PC-9 (cell line): ENCODE measurements at regions of chr6 and their contacts with region 1.

Region 1: GRCh38 chr6:130666786-130667185 is 160.4 kb upstream of the SMLR1 start:
- DNase-seq: no peak
- H3K4me3 ChIP-seq: no peak overlapping the region
- H3K27ac ChIP-seq: no peak overlapping the region
- H3K4me1 ChIP-seq: no peaks in the 10 kb centered on the region
- H3K27me3 ChIP-seq: no peaks in the 10 kb centered on the region
- CTCF ChIP-seq: no peak

Region 2: GRCh38 chr6:130313206-130313605 is 353.6 kb before region 1 on chr6:
- CTCF ChIA-PET with region 1: no interaction called
- POLR2A ChIA-PET with region 1: no interaction called
- intact Hi-C with region 1: no loop called
- DNase-seq: no peak
- H3K4me3 ChIP-seq: no peak overlapping the region
- H3K27ac ChIP-seq: no peak overlapping the region
- H3K4me1 ChIP-seq: no peaks in the 10 kb centered on the region; the same call in 1 of the 2 replicates
- H3K27me3 ChIP-seq: no peaks in the 10 kb centered on the region
- CTCF ChIP-seq: no peak

Region 3: GRCh38 chr6:130485870-130486269 is 180.9 kb before region 1 on chr6:
- CTCF ChIA-PET with region 1: no interaction called
- POLR2A ChIA-PET with region 1: interaction called, 13 read pairs
- intact Hi-C with region 1: no loop called
- DNase-seq: no peak
- H3K4me3 ChIP-seq: no peak overlapping the region
- H3K27ac ChIP-seq: no peak overlapping the region
- H3K4me1 ChIP-seq: no peaks in the 10 kb centered on the region
- H3K27me3 ChIP-seq: no peaks in the 10 kb centered on the region
- CTCF ChIP-seq: no peak

Region 4: DNA sequence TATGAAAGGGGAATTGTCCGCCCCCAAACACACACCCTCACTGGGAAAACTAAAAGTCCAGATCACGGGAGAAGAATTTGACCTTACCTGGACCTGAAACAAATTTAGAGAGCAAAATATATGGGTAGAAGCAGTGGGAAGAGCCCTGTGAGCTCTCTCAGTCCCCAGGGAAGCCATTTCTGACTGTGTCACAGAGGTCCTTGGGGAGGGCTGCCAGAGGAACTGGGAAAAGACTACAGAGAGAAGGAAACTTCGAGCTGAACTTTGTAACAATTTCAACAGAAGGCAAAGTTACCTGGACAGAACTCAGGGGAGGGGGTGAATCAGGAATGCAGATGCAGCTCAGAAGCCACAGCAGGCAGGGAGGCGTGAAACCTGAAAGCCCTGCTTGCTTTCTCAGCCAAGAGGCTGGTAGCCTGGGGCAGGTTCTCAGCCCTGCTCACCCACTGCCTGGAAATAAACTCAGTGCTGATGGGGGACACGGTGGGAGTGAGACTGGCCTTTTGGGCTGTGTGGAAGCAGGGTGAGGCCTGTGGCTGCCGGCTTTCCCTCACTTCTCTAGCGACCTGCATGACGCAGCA is 137.1 kb before region 1 on chr6:
- CTCF ChIA-PET with region 1: no interaction called
- POLR2A ChIA-PET with region 1: no interaction called
- intact Hi-C with region 1: no loop called
- DNase-seq: peak; percentile 27 to 40
- H3K4me3 ChIP-seq: no peak overlapping the region
- H3K27ac ChIP-seq: peak overlapping the region; percentile 27; the same call in 1 of the 2 replicates
- H3K4me1 ChIP-seq: no peaks in the 10 kb centered on the region
- H3K27me3 ChIP-seq: no peaks in the 10 kb centered on the region
- CTCF ChIP-seq: no peak